ENCODE measurements at regions of chr2 and their contacts with region 1.

Region 1: GRCh38 chr2:21042958-21043743 is 722 bp downstream of the APOB start:
- DNase-seq: peak; percentile 71
- ATAC-seq: peak; percentile 78
- H3K4me3 ChIP-seq: no peak overlapping the region
- H3K4me3 Mint-ChIP-seq: peak overlapping the region; percentile 57
- H3K27ac ChIP-seq: no peak overlapping the region
- H3K27ac Mint-ChIP-seq: no peak overlapping the region
- H3K4me1 ChIP-seq: peaks cover 4 to 5% of the 10 kb centered on the region in 2 donors
- H3K4me1 Mint-ChIP-seq: peaks cover 4% of the 10 kb centered on the region
- H3K27me3 ChIP-seq: peaks cover 0 to 12% (median 0%) of the 10 kb centered on the region in 4 experiments
- H3K27me3 Mint-ChIP-seq: peaks cover 30% of the 10 kb centered on the region
- CTCF ChIP-seq: peak; percentile 100

Region 2: DNA sequence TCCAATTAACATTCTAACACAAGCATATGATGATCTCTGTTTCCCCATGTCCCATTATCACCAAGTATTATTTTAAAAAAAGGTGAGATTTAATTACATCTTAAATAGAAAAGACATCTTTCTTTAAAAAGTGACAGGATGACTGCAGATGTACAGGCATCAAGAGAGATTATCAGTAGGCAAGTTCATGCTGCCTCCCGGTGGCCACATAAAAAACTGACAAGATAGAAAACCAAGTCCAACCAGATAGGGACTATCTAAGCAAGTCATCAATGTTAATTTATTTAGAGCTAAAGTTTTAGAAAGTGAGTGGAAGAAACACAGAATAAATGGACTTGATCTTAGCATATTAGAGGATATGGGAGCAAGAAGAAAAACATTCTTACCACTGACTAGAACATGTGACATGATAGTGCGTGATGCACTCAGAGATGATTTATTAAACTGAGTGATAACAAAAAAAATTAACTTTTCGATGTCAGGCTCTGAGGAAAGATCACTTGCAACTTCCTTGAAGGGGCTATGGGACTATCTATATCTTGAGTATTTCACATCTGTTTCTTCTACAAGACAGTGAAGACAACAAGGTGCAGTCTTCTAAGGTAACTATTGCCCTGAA is 75.3 kb after region 1 on chr2:
- CTCF ChIA-PET with region 1: interaction called, 6 read pairs
- POLR2A ChIA-PET with region 1: no interaction called
- intact Hi-C with region 1: loop called (anchors 2 kb)
- DNase-seq: peak; percentile 25
- ATAC-seq: no peak
- H3K4me3 ChIP-seq: no peak overlapping the region
- H3K4me3 Mint-ChIP-seq: no peak overlapping the region
- H3K27ac ChIP-seq: no peak overlapping the region
- H3K27ac Mint-ChIP-seq: no peak overlapping the region
- H3K4me1 ChIP-seq: no peaks in the 10 kb centered on the region
- H3K4me1 Mint-ChIP-seq: no peaks in the 10 kb centered on the region
- H3K27me3 ChIP-seq: no peaks in the 10 kb centered on the region
- H3K27me3 Mint-ChIP-seq: peaks cover 18% of the 10 kb centered on the region
- CTCF ChIP-seq: peak; percentile 35